Dendritic cell treated with granulocyte-macrophage colony-stimulating factor and Interleukin-4, amounts not matched to agents 40 ng/mL and 50 ng/mL, for 4 days (primary cell): ENCODE measurements at regions of chr17 and their contacts with region 1.

Region 1: DNA sequence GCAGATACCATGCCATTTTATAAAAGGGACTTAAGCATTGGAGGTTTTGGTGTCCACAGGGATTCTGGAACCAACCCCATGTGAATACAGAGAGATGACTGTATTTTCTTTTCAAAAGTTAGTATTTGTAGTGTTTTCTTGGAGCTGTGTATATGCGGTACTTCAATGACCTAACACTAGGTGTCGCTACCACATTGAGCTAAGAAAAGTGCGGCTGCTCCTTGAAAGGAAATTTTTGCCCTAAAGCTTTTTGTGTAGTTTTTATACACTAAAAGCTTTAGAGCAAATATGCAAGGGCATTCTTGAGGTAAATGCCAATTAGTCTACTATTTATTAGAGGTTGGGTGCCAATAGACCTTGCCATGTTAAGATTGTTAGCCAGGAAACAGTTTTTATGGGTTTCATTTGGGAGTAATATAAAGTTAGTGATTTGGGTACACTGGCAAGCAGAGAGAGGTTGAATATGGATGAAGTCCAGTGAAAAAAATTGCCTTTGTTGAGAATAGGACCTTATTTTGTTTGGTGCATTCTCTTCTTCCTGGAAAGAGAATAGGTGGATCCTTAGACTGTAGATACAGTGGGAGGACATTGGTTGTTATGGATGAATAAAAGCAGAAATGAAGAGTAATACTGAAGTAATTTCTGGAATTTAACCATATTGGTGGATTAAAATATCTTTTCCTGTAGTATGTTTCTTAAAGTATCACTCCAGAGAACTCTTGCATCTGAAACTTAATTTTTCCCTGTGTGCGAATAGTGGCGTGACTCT is 43.3 kb downstream of the BCAS3 start:
- H3K4me3 Mint-ChIP-seq: no peak overlapping the region
- H3K27ac Mint-ChIP-seq: no peak overlapping the region
- H3K4me1 Mint-ChIP-seq: no peaks in the 10 kb centered on the region
- H3K27me3 Mint-ChIP-seq: peaks cover 2% of the 10 kb centered on the region

Region 2: DNA sequence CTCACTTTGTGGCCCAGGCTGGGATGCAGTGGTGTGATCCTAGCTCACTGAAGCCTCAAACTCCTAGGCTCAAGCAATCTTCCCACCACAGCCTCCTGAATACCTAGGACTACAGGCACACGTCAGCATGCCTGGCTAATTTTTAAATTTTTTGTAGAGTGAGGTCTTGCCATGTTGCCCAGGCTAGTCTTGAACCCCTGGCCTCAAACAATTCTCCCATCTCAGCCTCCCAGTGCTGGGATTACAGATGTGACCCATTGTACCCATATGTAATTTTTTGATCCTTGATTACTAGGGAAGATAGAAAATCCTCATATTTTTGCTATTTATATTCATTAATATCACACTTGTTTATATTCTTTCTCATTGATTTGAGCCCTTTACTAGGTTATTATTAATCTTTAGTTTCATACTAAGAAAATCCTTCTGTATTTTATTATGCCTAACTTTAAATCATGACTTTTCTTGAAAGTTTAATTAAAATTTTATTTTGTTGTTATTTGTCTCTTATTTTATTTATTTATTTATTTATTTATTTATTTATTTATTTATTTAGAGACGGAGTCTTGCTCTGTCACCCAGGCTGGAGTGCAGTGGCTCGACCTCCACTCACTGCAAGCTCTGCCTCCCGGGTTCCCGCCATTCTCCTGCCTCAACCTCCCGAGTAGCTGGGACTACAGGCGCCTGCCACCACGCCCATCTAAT is 32.1 kb after region 1 on chr17:
- intact Hi-C with region 1: no loop called
- H3K4me3 Mint-ChIP-seq: no peak overlapping the region
- H3K27ac Mint-ChIP-seq: no peak overlapping the region
- H3K4me1 Mint-ChIP-seq: peaks cover 7% of the 10 kb centered on the region
- H3K27me3 Mint-ChIP-seq: no peaks in the 10 kb centered on the region

Region 3: GRCh38 chr17:60766778-60767190 is 45.8 kb after region 1 on chr17:
- intact Hi-C with region 1: no loop called
- H3K4me3 Mint-ChIP-seq: no peak overlapping the region
- H3K27ac Mint-ChIP-seq: no peak overlapping the region
- H3K4me1 Mint-ChIP-seq: no peaks in the 10 kb centered on the region
- H3K27me3 Mint-ChIP-seq: no peaks in the 10 kb centered on the region

Region 4: GRCh38 chr17:60846175-60846574 is 125.2 kb after region 1 on chr17:
- intact Hi-C with region 1: no loop called
- H3K4me3 Mint-ChIP-seq: no peak overlapping the region
- H3K27ac Mint-ChIP-seq: no peak overlapping the region
- H3K4me1 Mint-ChIP-seq: peaks cover 6% of the 10 kb centered on the region
- H3K27me3 Mint-ChIP-seq: no peaks in the 10 kb centered on the region

Region 5: DNA sequence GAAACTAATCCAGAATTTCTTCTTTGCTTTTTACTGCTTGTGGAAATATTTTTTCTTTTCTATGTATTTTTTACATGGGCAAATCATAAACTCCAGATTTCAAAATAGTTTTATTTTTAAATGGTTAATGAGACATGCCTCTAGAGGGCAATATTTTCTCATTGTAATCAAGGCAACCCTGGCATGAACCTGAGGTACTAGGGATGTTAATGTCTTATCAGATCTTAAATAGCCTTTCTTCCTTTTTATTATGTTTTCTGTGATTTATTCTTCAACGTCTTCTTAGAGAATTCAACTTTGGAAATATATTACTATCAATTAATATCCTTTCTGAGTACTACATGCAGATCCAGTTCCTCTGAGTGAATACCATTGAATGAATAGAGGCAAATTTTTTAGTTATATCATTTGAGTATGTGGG is 281.4 kb after region 1 on chr17:
- intact Hi-C with region 1: loop called (anchors 10 kb)
- H3K4me3 Mint-ChIP-seq: no peak overlapping the region
- H3K27ac Mint-ChIP-seq: no peak overlapping the region
- H3K4me1 Mint-ChIP-seq: no peaks in the 10 kb centered on the region
- H3K27me3 Mint-ChIP-seq: no peaks in the 10 kb centered on the region